ENCODE measurements at regions of chr14 and their contacts with region 1.

Region 1: GRCh38 chr14:20855652-20856291 is 35.4 kb upstream of the RNASE3 start:
- DNase-seq: peak in 4 of 5 donors; percentile 54 to 65 (median 58)
- ATAC-seq: peak; percentile 84 to 96 (median 95)
- H3K4me3 ChIP-seq: no peak overlapping the region
- H3K27ac ChIP-seq: no peak overlapping the region
- H3K4me1 ChIP-seq: peaks cover 0 to 6% (median 0%) of the 10 kb centered on the region in 12 donors
- H3K27me3 ChIP-seq: peaks cover 0 to 9% (median 0%) of the 10 kb centered on the region in 9 donors
- CTCF ChIP-seq: peak; percentile 64 to 85 (median 74)
- POLR2A ChIP-seq: no peak

Region 2: GRCh38 chr14:20697273-20698017 is 158.3 kb before region 1 on chr14:
- intact Hi-C with region 1: loop called (anchors 1 to 5 kb)
- DNase-seq: peak in 4 of 5 donors; percentile 40 to 71 (median 52)
- ATAC-seq: peak; percentile 15 to 89 (median 80)
- H3K4me3 ChIP-seq: no peak overlapping the region
- H3K27ac ChIP-seq: no peak overlapping the region
- H3K4me1 ChIP-seq: peaks cover 0 to 9% (median 0%) of the 10 kb centered on the region in 12 donors
- H3K27me3 ChIP-seq: no peaks in the 10 kb centered on the region
- CTCF ChIP-seq: peak; percentile 62 to 84 (median 77)
- POLR2A ChIP-seq: no peak

Region 3: GRCh38 chr14:20757965-20758364 is 97.8 kb before region 1 on chr14:
- intact Hi-C with region 1: loop called in 8 of 10 experiments (anchors 2 to 10 kb)
- DNase-seq: peak in 2 of 5 donors; percentile 28 to 33
- ATAC-seq: no peak
- H3K4me3 ChIP-seq: no peak overlapping the region
- H3K27ac ChIP-seq: no peak overlapping the region
- H3K4me1 ChIP-seq: peaks cover 0 to 7% (median 0%) of the 10 kb centered on the region in 12 donors
- H3K27me3 ChIP-seq: no peaks in the 10 kb centered on the region
- CTCF ChIP-seq: peak; percentile 32 to 60 (median 43)
- POLR2A ChIP-seq: no peak

Region 4: GRCh38 chr14:20789230-20789813 is 66.5 kb before region 1 on chr14:
- intact Hi-C with region 1: no loop called
- DNase-seq: no peak
- ATAC-seq: peak in 2 of 4 donors; percentile 36 to 60
- H3K4me3 ChIP-seq: no peak overlapping the region
- H3K27ac ChIP-seq: peak overlapping the region in 9 of 12 donors; percentile 4 to 72 (median 39)
- H3K4me1 ChIP-seq: peaks cover 0 to 21% (median 5%) of the 10 kb centered on the region in 12 donors
- H3K27me3 ChIP-seq: no peaks in the 10 kb centered on the region
- CTCF ChIP-seq: no peak
- POLR2A ChIP-seq: no peak

Region 5: DNA sequence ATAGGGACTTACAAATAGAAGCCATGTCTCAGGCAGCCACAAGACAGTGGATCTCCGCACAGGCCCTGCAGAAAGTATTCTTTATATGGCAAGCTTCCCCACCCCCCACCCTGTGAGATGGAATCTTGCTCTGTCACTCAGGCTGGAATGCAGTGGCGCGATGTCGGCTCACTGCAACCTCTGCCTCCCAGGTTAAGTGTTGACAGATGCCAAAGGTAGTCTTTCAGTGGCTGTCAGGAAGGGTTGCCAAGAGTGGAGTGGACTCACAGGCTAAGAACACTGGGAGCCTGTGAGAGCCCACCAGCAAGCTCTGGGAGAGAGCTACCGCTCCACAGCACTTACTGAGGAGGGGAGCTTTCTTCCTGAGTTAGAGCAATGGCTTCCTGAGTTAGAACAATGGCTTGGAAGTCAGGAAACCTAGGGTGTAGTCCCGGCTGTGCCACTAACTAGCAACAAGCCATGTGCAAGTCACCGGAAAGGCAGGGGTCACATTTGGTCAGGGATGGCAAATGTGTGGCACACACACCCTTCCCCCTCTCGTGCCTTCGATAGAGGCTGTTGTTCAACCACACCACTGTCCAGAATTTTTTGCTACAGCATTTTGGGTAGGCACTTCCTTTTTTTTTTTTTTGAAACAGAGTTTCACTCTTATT is 55.8 kb before region 1 on chr14:
- intact Hi-C with region 1: loop called in 2 of 10 experiments (anchors 2 to 5 kb)
- DNase-seq: peak; percentile 54 to 75 (median 67)
- ATAC-seq: peak; percentile 56 to 80 (median 66)
- H3K4me3 ChIP-seq: peak overlapping the region in 11 of 12 donors; percentile 8 to 83 (median 61)
- H3K27ac ChIP-seq: peak overlapping the region; percentile 62 to 93 (median 84)
- H3K4me1 ChIP-seq: peaks cover 0 to 64% (median 23%) of the 10 kb centered on the region in 12 donors
- H3K27me3 ChIP-seq: no peaks in the 10 kb centered on the region
- CTCF ChIP-seq: no peak
- POLR2A ChIP-seq: no peak

Region 6: GRCh38 chr14:20873370-20874177 is 17.8 kb after region 1 on chr14:
- intact Hi-C with region 1: loop called in 2 of 10 experiments (anchors 1 to 2 kb)
- DNase-seq: peak; percentile 84 to 93 (median 88)
- ATAC-seq: peak; percentile 78 to 97 (median 97)
- H3K4me3 ChIP-seq: peak overlapping the region in 8 of 12 donors; percentile 15 to 35 (median 25)
- H3K27ac ChIP-seq: no peak overlapping the region
- H3K4me1 ChIP-seq: peaks cover 0 to 13% (median 2%) of the 10 kb centered on the region in 12 donors
- H3K27me3 ChIP-seq: no peaks in the 10 kb centered on the region
- CTCF ChIP-seq: peak; percentile 67 to 94 (median 83)
- POLR2A ChIP-seq: no peak

Region 7: DNA sequence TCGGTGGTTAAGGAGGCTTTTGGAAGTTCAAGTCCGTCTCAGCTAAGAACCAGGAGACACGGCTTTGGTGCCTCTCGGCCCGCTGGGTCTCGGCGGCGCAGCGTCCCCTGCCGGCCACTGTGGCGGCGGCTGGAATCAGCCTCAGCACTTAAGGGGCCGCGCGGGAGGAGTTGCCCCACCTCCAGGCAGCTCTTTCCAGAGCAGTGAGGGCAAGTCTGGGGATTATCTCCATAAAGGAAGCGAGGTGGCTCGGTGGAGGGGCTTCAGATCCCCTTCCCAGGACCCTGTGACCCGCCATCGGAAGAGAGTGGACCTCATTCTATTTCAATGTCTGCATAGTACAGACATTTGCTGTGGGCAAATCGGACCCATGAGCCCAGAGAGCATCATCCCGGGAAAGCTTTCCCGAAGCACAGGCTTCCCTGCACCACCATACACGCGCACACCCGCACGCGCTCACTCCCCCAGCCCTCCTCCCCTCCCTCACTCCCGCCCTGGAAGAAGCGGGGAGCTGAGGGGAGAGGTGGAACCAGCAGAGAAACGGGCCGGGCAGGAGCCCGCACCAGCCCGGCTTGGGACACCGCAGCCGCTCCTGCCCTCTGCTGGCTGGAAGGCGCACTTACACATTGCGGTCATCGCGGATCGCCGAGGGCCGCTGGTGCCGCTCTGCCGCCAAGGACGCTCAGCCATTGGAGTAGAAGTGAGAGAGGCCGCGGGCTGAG is 115.4 kb after region 1 on chr14:
- intact Hi-C with region 1: loop called (anchors 1 to 10 kb)
- DNase-seq: peak; percentile 85 to 93 (median 86)
- ATAC-seq: peak; percentile 92 to 97 (median 96)
- H3K4me3 ChIP-seq: peak overlapping the region; percentile 43 to 73 (median 64)
- H3K27ac ChIP-seq: peak overlapping the region in 11 of 12 donors; percentile 14 to 83 (median 58)
- H3K4me1 ChIP-seq: peaks cover 0 to 13% (median 5%) of the 10 kb centered on the region in 12 donors
- H3K27me3 ChIP-seq: no peaks in the 10 kb centered on the region
- CTCF ChIP-seq: peak; percentile 68 to 90 (median 76)
- POLR2A ChIP-seq: no peak

Region 8: DNA sequence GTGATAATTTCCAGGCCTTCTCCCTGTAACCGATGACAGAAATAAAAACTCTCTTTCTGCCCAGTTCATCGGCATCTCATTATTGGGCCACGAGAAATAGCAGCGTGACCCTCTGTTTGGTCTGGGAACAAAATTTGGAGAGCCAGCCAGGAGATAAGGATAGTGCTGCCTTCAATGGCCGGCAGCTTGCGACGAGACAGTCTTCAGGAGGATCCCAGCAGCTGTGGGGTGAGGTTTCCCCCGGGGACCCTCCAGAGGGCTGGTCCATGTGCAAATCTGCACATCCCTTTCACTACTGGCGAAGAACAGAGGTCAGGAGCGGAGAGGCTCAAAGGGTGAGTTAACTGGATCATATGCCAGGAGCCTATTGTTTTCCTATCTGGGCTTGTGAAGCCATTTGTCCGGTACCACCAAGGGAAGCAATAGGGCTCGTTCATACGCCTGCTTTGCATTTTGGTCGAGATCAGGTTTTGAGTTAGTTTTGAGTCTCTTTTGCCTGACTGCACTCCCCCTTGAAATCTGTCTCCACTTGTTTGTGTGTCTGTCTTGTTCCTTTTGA is 148.1 kb after region 1 on chr14:
- intact Hi-C with region 1: no loop called
- DNase-seq: peak in 4 of 5 donors; percentile 44 to 61 (median 46)
- ATAC-seq: peak; percentile 69 to 74 (median 72)
- H3K4me3 ChIP-seq: peak overlapping the region; percentile 2 to 69 (median 45)
- H3K27ac ChIP-seq: peak overlapping the region; percentile 33 to 76 (median 62)
- H3K4me1 ChIP-seq: peaks cover 0 to 17% (median 4%) of the 10 kb centered on the region in 12 donors
- H3K27me3 ChIP-seq: no peaks in the 10 kb centered on the region
- CTCF ChIP-seq: no peak
- POLR2A ChIP-seq: no peak

Region 9: DNA sequence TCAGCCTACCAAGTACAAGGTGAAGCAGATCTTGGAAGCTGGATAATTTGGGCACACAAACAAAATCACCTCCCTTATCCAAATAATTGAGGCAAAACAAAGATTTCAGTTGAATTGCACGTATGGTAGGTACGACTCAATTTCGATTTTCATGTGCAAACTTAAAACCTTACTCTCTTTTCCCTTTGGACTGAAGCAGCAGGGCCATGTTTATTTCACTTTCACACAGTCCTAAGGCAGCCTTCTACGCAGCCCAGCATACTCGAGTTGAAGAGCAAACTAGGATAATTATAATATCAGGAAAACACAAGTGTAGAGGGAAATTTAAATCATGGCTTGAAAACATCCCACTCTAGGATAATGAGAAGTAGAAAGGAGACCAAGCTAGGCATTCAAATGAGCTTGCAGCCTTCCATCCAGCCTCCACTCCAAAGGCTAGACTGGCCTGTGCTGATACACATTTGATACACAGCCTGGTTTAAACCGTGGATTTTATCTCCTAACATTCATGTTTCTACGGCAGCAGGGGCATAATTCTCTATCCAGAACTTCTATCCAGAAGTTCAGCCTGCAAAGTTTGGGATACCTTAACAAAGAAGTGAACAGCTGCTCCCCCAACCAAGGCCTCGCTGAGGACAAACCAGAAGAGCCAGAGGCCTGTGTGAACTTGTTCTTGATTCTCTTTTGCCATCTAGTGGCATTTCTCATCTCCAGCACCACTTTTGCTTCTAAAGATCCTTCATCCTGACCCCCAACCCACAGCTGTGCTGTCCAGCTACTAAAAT is 184.0 kb after region 1 on chr14:
- intact Hi-C with region 1: loop called in 8 of 10 experiments (anchors 2 to 10 kb)
- DNase-seq: peak in 4 of 5 donors; percentile 45 to 61 (median 55)
- ATAC-seq: peak; percentile 53 to 75 (median 66)
- H3K4me3 ChIP-seq: peak overlapping the region in 5 of 12 donors; percentile 6 to 43 (median 9)
- H3K27ac ChIP-seq: peak overlapping the region; percentile 19 to 91 (median 74)
- H3K4me1 ChIP-seq: peaks cover 5 to 59% (median 36%) of the 10 kb centered on the region in 12 donors
- H3K27me3 ChIP-seq: no peaks in the 10 kb centered on the region
- CTCF ChIP-seq: peak; percentile 55 to 82 (median 71)
- POLR2A ChIP-seq: no peak

Region 10: DNA sequence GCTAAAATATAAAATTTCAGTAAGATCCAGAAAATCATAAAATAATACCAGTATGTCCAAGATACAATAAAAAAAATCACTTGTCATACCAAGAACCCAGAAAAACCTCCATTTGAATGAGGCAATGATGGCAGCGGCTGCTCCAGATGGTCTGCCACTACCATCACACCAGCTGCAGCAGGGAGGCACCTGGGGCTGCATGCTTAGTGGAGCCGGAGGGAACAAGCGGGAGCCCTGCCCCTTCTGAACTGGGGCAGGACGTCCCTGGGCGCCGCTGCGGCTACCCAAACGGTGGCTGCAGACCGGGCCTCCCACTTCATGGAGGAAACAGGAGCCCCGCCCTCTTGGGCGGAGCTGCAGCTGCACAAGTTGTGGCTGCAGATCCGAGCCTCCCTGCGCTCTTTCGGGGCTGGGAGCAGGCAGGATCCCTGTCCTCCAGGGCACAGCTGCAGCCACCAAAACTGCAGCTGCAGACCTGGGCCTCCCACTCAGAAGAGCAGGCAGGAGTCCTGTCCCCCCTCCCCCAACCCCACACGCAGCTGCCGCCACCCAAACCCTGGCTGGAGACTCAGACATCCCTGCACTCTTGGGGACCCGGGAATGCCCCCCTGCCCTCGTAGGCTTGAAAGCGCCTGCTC is 336.2 kb after region 1 on chr14:
- intact Hi-C with region 1: no loop called
- DNase-seq: peak; percentile 62 to 89 (median 80)
- ATAC-seq: peak; percentile 67 to 94 (median 93)
- H3K4me3 ChIP-seq: peak overlapping the region in 11 of 12 donors; percentile 1 to 51 (median 45)
- H3K27ac ChIP-seq: no peak overlapping the region
- H3K4me1 ChIP-seq: peaks cover 0 to 13% (median 0%) of the 10 kb centered on the region in 12 donors
- H3K27me3 ChIP-seq: no peaks in the 10 kb centered on the region
- CTCF ChIP-seq: no peak
- POLR2A ChIP-seq: no peak

Measured in heart left ventricle (tissue), 16 donors.